PC-9 (cell line): ENCODE measurements at regions of chr1 and their contacts with region 1.

Region 1: GRCh38 chr1:153958111-153958960 is at the start of gene CRTC2:
- DNase-seq: peak; percentile 94 to 96
- H3K4me3 ChIP-seq: peak within 1 kb of the TSS; percentile 67
- H3K27ac ChIP-seq: peak within 1 kb of the TSS; percentile 28
- H3K4me1 ChIP-seq: peaks cover 29% of the 10 kb centered on the region
- H3K27me3 ChIP-seq: no peaks in the 10 kb centered on the region
- CTCF ChIP-seq: no peak
- total RNA-seq, gene CRTC2: 44.5 and 63.6 TPM in 2 replicates

Region 2: DNA sequence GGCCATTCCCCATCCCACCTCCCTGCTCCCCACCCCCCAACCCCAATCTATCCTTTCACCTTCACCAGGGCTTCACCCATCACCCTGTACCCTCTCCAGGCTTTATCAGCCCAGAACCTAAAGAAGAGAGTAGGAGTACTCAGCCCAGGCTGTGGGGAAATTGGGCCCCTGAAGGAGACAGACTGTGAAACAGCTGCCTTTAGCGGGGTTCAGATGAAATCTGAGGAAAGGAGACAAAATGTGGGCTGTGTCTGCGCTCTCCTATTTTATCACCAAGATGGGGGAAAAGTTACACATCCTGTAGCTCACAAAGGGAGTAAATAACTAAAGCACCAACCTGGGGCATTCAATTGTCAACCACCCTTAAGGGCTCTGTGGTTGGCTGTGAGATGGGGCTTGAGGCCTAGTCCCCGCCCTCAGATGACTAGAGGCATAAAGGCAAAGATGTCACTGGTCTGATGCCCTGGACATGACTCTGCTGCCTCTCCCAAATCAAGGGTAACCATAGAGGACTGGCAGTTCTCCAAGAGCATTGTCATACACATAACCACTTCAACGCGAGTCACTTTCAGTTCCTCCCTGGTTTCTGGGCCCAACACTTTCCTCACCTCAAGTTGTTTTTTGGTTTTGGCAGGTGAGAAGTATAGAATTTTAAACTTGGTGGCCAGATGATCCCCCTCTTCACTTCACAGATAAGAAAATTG is 153.1 kb before region 1 on chr1:
- CTCF ChIA-PET with region 1: no interaction called
- POLR2A ChIA-PET with region 1: interaction called, 10 read pairs
- intact Hi-C with region 1: no loop called
- DNase-seq: peak; percentile 33 to 70
- H3K4me3 ChIP-seq: no peak overlapping the region
- H3K27ac ChIP-seq: peak overlapping the region; percentile 86
- H3K4me1 ChIP-seq: peaks cover 8% of the 10 kb centered on the region
- H3K27me3 ChIP-seq: no peaks in the 10 kb centered on the region
- CTCF ChIP-seq: no peak

Region 3: DNA sequence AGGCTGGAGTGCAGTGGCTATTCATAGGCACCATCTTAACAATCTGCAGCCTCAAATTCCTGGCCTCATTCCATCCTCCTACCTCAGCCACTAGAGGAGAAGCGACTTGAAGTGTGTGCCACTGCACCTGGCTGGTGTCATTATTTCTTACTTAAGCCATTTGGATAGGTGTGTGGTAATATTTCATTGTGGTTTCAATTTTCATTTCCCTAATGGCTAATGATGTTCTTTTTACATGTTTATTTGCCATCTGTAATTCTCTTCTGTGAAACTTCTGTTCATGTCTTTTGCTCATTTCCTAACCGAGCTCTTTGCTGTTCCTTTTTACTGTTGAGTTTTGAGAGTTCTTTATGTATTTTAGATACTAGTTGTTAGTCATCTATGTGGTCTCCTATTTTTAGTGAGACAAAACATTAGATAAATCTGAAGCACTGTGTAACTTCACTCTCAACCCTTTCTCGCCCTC is 116.3 kb before region 1 on chr1:
- CTCF ChIA-PET with region 1: no interaction called
- POLR2A ChIA-PET with region 1: no interaction called
- intact Hi-C with region 1: no loop called
- DNase-seq: no peak
- H3K4me3 ChIP-seq: no peak overlapping the region
- H3K27ac ChIP-seq: no peak overlapping the region
- H3K4me1 ChIP-seq: no peaks in the 10 kb centered on the region
- H3K27me3 ChIP-seq: no peaks in the 10 kb centered on the region
- CTCF ChIP-seq: no peak

Region 4: DNA sequence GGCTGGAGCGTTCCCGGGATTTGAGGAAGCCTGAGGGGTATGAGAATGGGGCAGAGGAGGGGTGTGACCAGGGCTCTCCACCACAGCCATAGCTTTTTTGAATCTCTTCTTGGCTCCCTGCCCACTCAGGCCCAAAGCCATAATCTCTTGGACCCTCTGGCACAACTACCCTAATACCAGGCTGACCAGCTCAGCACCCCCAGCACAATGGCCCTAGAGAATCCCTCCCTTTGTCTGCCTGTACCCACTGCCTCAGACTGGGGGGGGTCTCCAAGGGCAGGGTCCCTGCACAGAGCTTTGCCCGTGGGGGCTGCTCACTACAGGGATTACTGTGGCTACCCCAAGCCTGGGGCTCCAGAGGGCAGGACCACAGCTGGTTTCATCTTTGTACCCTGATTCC is 19.3 kb before region 1 on chr1:
- CTCF ChIA-PET with region 1: no interaction called
- POLR2A ChIA-PET with region 1: no interaction called
- intact Hi-C with region 1: no loop called
- DNase-seq: no peak
- H3K4me3 ChIP-seq: no peak overlapping the region
- H3K27ac ChIP-seq: no peak overlapping the region
- H3K4me1 ChIP-seq: no peaks in the 10 kb centered on the region
- H3K27me3 ChIP-seq: no peaks in the 10 kb centered on the region
- CTCF ChIP-seq: no peak